ENCODE measurements at regions of chr3 and their contacts with region 1.

Region 1: GRCh38 chr3:32947789-32948238 is 3.6 kb upstream of the CCR4 start:
- DNase-seq: peak; percentile 84
- ATAC-seq: peak; percentile 85 to 86

Region 2: DNA sequence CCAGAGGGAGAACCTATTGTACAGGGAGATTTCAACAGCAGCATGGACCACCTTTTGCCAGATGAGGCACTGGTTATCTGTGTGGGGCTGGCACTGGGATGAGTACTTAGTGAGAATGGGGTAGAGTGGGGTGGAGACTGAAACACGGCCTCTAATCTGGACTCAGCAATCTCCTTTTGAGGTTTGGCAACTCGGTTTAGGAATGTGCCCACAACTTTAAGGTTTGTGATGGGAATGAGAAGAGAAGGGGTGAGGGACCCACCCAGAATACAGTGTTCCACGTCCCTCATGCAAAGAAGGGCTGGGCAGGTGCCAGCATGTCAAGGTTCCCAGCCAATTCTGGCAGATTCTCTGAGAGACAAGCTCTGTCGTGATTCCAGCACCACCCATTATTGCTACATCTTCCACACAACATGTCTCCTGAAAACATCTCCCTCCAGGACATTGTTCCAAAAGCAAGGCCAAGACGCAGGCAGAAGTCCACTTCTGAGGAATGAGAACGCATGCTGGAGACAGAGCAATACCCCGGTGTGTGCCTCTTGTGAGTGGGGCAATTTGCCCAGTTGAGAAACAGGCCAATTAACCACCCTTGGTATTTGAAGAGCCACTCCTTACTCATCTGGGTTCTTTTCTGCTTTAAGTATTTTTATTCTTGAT is 33.9 kb before region 1 on chr3:
- intact Hi-C with region 1: no loop called
- DNase-seq: peak; percentile 41
- ATAC-seq: peak in 1 of 2 donors; percentile 92

Region 3: DNA sequence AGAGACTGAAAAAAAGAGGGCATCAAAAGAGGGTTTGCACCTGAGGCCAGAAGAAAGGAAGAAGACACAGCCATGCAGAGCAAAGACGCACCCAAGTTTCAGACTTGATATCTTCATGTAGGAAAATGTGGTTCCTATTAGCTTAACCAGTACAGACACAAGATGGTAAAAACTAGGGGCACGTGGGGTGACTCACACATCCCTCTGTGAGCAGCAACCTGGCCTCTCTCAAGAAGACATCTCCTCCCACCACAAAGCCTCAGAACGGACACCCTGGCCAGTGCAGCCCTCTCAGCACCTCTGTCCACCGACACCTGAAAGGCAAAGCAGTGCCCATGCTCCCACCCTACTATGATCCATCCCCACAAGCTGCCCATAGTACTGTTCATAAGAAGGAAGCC is 115.8 kb after region 1 on chr3:
- intact Hi-C with region 1: loop called in 1 of 2 experiments (anchors 10 kb)
- DNase-seq: no peak
- ATAC-seq: peak in 1 of 2 donors; percentile 47

Region 4: GRCh38 chr3:33074217-33075067 is 126.6 kb after region 1 on chr3:
- intact Hi-C with region 1: loop called (anchors 5 to 10 kb)
- DNase-seq: peak; percentile 54
- ATAC-seq: peak; percentile 61 to 77